ENCODE measurements at regions of chr12 and their contacts with region 1.

Region 1: GRCh38 chr12:107109741-107110719 is 16.7 kb upstream of the CRY1 start:
- DNase-seq: no peak

Region 2: GRCh38 chr12:106903241-106903945 is 206.6 kb before region 1 on chr12:
- in situ Hi-C with region 1: no loop called
- DNase-seq: peak; percentile 74

Region 3: GRCh38 chr12:106957583-106957982 is 152.4 kb before region 1 on chr12:
- in situ Hi-C with region 1: no loop called
- DNase-seq: peak; percentile 31

Region 4: GRCh38 chr12:106999446-106999845 is 110.6 kb before region 1 on chr12:
- in situ Hi-C with region 1: no loop called
- DNase-seq: no peak

Region 5: DNA sequence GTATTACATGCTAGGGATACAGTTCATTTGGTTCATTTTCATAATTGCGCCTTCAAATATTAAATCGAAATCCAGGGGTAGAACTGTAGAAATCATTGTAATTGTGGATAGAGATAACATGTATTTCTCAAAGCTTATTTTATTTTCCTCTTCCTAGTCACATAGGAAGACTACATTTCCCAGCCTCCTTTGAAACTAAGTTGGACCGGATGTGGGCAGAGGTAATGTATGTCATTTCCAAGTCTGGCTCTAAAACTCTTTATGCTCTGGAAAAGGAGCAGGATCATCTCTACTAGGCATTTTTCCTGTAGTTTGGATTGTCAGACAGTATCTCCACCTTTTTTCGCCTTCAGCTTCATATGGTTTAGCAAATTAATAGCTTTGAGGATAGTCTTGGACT is 53.4 kb after region 1 on chr12:
- in situ Hi-C with region 1: no loop called
- DNase-seq: no peak

Region 6: GRCh38 chr12:107607464-107608392 is 497.7 kb after region 1 on chr12:
- in situ Hi-C with region 1: loop called (anchors 25 kb)
- DNase-seq: peak; percentile 82

Measured in ACHN (cell line).